ENCODE measurements at regions of chrX and their contacts with region 1.

Region 1: GRCh38 chrX:23667239-23668177 is at the start of gene PRDX4:
- DNase-seq: peak; percentile 66
- H3K4me3 Mint-ChIP-seq: peak within 1 kb of the TSS; percentile 88
- H3K27ac Mint-ChIP-seq: peak within 1 kb of the TSS; percentile 94
- H3K4me1 Mint-ChIP-seq: peaks cover 37% of the 10 kb centered on the region
- H3K27me3 Mint-ChIP-seq: no peaks in the 10 kb centered on the region
- total RNA-seq, gene PRDX4: 75.5 and 83.2 TPM in 2 replicates

Region 2: GRCh38 chrX:23756157-23756559 is 88.7 kb after region 1 on chrX:
- intact Hi-C with region 1: no loop called
- DNase-seq: peak; percentile 44
- H3K4me3 Mint-ChIP-seq: no peak overlapping the region
- H3K27ac Mint-ChIP-seq: no peak overlapping the region
- H3K4me1 Mint-ChIP-seq: peaks cover 5% of the 10 kb centered on the region
- H3K27me3 Mint-ChIP-seq: no peaks in the 10 kb centered on the region

Region 3: DNA sequence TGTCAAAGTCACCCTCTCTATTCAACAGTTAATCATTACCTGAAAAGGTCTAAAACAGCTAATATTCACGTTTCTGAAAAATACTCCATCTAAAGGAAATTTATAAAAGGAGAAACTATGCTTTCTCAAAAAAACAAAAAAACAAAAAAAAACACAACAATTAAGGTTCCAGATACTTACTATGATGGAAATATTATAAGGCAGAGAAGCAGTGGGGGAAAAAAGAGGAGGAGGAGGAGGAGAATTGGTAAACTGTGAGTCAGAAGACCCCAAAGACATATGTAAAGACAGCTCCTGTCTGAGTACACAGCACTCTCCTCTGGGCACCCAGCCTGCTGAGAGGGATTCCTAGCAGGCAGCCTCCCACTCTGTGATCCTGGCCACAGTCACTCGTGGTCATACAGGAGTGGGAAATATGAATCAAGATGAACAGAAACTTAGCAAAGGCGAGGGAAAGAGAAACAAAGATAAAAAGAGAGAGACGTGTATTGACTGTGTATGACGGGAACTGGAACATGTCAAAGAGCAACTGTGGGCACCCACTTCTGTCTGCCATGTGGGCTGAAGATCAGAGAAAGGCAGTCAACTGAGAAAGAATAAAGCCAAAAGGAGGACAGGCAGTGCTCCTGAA is 347.0 kb after region 1 on chrX:
- intact Hi-C with region 1: loop called (anchors 5 kb)
- DNase-seq: peak; percentile 21
- H3K4me3 Mint-ChIP-seq: peak overlapping the region; percentile 64
- H3K27ac Mint-ChIP-seq: peak overlapping the region; percentile 89
- H3K4me1 Mint-ChIP-seq: peaks cover 36% of the 10 kb centered on the region
- H3K27me3 Mint-ChIP-seq: no peaks in the 10 kb centered on the region

Measured in activated T-helper 1 cell treated with anti-CD3 and anti-CD28 coated beads, Interleukin-12 subunit alpha, Interleukin-12 subunit beta, Interleukin-2, Interleukin-4 antibody, amounts not matched to agents 30 ng/mL and 10 ng/mL and 1 ng/mL, durations not matched to agents 14 hours and 24 hours and 36 hours (primary cell).